ENCODE measurements at regions of chr13 and their contacts with region 1.

Region 1: DNA sequence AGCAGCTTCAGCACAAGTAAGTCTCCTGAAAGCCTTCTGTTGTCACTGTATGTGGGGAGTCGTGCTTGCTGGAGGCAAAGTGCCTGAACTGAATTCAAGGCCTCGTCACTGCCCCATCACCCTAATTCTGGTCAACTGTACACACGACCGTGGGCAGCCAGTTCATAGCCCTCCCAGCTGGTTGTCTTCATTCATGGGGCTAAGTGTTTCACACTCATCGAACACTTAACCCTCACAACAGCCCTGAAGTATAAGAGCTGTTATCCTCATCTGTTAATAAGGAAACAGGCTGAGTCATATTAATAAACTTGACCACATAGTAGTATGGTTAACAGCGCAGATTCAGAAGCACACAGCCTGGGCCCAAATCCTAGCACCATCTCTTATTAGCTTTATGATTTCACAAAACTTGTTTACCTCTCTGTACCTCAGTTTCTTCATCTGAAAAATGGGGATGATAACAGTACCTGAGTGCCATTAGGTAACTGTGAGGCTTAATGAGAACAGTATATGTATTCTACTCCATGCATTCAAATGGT is 66.7 kb downstream of the CDADC1 start:
- DNase-seq: no peak
- H3K4me3 ChIP-seq: no peak overlapping the region
- H3K4me3 Mint-ChIP-seq: peak overlapping the region; percentile 20
- H3K27ac Mint-ChIP-seq: peak overlapping the region; percentile 60
- H3K4me1 ChIP-seq: peaks cover 21% of the 10 kb centered on the region
- H3K4me1 Mint-ChIP-seq: peaks cover 26% of the 10 kb centered on the region
- H3K27me3 ChIP-seq: no peaks in the 10 kb centered on the region
- H3K27me3 Mint-ChIP-seq: no peaks in the 10 kb centered on the region
- CTCF ChIP-seq: no peak

Region 2: DNA sequence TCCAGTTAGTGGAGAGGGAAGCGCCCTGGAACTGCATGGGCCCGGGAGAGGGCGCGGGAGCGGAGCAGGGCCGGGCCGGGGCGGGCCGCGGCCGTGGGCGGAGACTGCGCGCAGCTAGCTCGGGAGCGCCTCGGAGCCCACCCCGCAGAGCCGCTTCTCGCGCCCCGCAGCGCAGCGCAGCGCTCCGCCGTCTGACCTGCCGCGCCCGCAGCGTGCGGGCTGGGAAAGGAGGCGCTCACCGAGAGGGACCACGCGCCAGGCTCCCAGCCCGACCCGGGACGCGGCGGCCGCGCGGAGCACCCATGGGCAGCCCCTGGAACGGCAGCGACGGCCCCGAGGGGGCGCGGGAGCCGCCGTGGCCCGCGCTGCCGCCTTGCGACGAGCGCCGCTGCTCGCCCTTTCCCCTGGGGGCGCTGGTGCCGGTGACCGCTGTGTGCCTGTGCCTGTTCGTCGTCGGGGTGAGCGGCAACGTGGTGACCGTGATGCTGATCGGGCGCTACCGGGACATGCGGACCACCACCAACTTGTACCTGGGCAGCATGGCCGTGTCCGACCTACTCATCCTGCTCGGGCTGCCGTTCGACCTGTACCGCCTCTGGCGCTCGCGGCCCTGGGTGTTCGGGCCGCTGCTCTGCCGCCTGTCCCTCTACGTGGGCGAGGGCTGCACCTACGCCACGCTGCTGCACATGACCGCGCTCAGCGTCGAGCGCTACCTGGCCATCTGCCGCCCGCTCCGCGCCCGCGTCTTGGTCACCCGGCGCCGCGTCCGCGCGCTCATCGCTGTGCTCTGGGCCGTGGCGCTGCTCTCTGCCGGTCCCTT is 94.2 kb before region 1 on chr13 and contains the start of gene MLNR:
- CTCF ChIA-PET with region 1: no interaction called
- POLR2A ChIA-PET with region 1: no interaction called
- intact Hi-C with region 1: no loop called
- DNase-seq: peak; percentile 70 to 82
- H3K4me3 ChIP-seq: peak within 1 kb of the TSS; percentile 31
- H3K4me3 Mint-ChIP-seq: peak within 1 kb of the TSS; percentile 74
- H3K27ac Mint-ChIP-seq: no peak within 1 kb of the TSS
- H3K4me1 ChIP-seq: 0 out of 2 replicates have a peak, but pooled peaks cover 3% of the 10 kb centered on the region
- H3K4me1 Mint-ChIP-seq: peaks cover 19% of the 10 kb centered on the region
- H3K27me3 ChIP-seq: no peaks in the 10 kb centered on the region
- H3K27me3 Mint-ChIP-seq: peaks cover 14% of the 10 kb centered on the region
- CTCF ChIP-seq: peak; percentile 33 to 38
- total RNA-seq, gene MLNR: 0.44 TPM in 1 of 2 replicates, not detected in the other

Region 3: DNA sequence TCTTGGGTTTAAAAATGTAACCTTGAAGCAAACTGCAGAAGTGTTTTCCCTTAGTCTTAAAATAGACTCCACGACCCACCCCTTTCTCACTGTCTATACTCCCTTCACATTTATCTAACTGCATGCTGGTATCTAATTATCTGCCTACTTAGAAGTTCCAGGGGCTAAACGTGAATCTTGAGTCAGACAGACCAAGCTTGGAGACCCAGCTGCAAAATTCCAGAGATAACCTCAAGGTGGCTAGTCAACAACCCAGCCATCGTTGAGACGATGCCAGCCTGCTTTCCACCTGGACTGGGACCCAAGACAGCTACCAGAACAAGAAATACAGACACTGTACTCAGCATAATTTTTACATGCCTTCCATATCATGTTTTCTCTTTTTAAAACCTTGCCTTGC is 15.4 kb after region 1 on chr13:
- CTCF ChIA-PET with region 1: interaction called, 11 read pairs
- POLR2A ChIA-PET with region 1: interaction called, 3 read pairs
- intact Hi-C with region 1: no loop called
- DNase-seq: peak in 1 of 2 experiments; percentile 32
- H3K4me3 ChIP-seq: no peak overlapping the region
- H3K4me3 Mint-ChIP-seq: no peak overlapping the region
- H3K27ac Mint-ChIP-seq: peak overlapping the region; percentile 37
- H3K4me1 ChIP-seq: peaks cover 20% of the 10 kb centered on the region
- H3K4me1 Mint-ChIP-seq: peaks cover 27% of the 10 kb centered on the region
- H3K27me3 ChIP-seq: no peaks in the 10 kb centered on the region
- H3K27me3 Mint-ChIP-seq: no peaks in the 10 kb centered on the region
- CTCF ChIP-seq: no peak

Region 4: DNA sequence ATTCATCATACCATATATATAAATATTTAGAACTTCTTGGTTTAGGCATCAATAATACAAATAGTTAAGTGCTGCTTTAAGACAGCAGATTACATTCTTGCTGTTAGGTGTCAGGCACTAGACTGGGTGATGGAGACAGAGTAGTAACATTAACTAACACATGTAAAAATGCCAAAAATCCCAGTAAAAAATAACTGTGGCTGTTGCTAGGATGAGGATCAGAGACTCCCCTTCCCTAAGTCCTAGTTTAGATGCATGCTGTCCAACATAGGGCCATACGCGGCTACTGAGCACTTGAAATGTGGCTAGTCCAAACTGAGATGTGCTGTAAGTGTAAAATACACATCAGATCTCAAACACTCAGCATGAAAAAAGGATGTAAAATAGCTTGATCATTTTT is 28.0 kb after region 1 on chr13:
- CTCF ChIA-PET with region 1: no interaction called
- POLR2A ChIA-PET with region 1: no interaction called
- intact Hi-C with region 1: loop called (anchors 2 kb)
- DNase-seq: no peak
- H3K4me3 ChIP-seq: no peak overlapping the region
- H3K4me3 Mint-ChIP-seq: no peak overlapping the region
- H3K27ac Mint-ChIP-seq: no peak overlapping the region
- H3K4me1 ChIP-seq: peaks cover 54% of the 10 kb centered on the region
- H3K4me1 Mint-ChIP-seq: peaks cover 19% of the 10 kb centered on the region
- H3K27me3 ChIP-seq: no peaks in the 10 kb centered on the region
- H3K27me3 Mint-ChIP-seq: no peaks in the 10 kb centered on the region
- CTCF ChIP-seq: no peak

Region 5: DNA sequence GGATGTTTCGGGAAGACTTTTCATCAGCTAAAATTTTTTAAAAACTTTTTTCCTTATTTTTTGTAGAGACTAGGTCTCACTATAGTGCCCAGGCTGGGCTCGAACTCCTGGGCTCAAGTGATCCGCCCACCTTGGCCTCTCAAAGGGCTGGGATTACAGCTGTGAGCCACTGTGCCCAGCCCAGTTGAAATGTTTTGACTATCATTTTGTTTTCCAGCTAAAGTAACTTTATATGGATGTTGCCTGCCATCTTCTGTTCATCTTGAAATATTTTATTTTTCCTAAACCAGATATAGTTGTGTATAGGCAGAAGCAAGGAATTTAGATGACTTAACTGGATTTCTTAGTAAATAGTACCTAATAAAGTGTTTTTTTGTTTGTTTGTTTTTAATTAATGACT is 122.5 kb after region 1 on chr13:
- CTCF ChIA-PET with region 1: interaction called, 10 read pairs
- POLR2A ChIA-PET with region 1: no interaction called
- intact Hi-C with region 1: no loop called
- DNase-seq: peak in 1 of 2 experiments; percentile 28
- H3K4me3 ChIP-seq: no peak overlapping the region
- H3K4me3 Mint-ChIP-seq: no peak overlapping the region
- H3K27ac Mint-ChIP-seq: no peak overlapping the region
- H3K4me1 ChIP-seq: no peaks in the 10 kb centered on the region
- H3K4me1 Mint-ChIP-seq: no peaks in the 10 kb centered on the region
- H3K27me3 ChIP-seq: no peaks in the 10 kb centered on the region
- H3K27me3 Mint-ChIP-seq: no peaks in the 10 kb centered on the region
- CTCF ChIP-seq: no peak